Sigmoid colon (tissue), 7 donors: ENCODE measurements at regions of chr11 and their contacts with region 1.

Region 1: DNA sequence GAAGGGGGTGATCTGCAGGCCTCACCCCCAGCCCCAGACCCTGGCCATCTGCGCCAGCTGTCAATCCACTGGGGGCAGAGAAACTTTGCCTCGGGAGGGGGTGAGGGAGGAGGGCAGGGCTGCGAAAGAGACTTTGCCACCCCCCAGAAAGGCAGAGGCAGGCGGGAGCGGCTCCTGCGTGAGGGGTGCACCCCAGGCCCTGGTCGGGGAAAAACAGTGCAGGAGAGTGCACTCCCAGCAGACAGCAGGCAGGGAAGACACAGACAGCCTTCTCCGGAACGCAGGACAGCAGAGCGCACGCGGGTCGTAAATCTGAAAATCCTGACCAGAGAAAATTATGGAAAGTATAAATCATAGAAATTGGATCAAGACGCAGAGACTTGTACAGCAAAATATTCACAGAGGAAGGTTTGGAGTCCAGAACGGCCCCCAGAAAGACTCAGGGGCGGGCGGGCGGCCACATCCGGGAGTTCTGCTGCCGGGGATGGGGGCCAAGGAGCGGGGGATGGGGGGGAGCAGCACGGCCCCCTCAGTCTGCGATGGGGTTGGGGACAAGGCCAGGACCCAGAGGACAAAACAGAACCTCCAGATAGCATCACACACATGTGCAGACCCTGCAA is 8.0 kb upstream of the MRPL23 start:
- DNase-seq: peak; percentile 71
- H3K4me3 ChIP-seq: peak overlapping the region in 1 of 4 donors; percentile 2
- H3K27ac ChIP-seq: peak overlapping the region in 2 of 4 donors; percentile 12 to 42
- H3K4me1 ChIP-seq: peaks cover 0 to 6% (median 3%) of the 10 kb centered on the region in 4 donors
- H3K27me3 ChIP-seq: peaks cover 0 to 5% (median 0%) of the 10 kb centered on the region in 3 donors
- CTCF ChIP-seq: no peak
- EP300 ChIP-seq: no peak
- POLR2A ChIP-seq: no peak

Region 2: GRCh38 chr11:1893581-1894359 is 45.3 kb before region 1 on chr11:
- intact Hi-C with region 1: loop called (anchors 1 kb)
- DNase-seq: no peak
- H3K4me3 ChIP-seq: no peak overlapping the region
- H3K27ac ChIP-seq: no peak overlapping the region
- H3K4me1 ChIP-seq: no peaks in the 10 kb centered on the region
- H3K27me3 ChIP-seq: peaks cover 0 to 4% (median 0%) of the 10 kb centered on the region in 3 donors
- CTCF ChIP-seq: no peak
- EP300 ChIP-seq: no peak
- POLR2A ChIP-seq: no peak